Pancreas (tissue), 10 donors: ENCODE measurements at regions of chr1 and their contacts with region 1.

Region 1: GRCh38 chr1:175481126-175482066 is 262.0 kb downstream of the TNR start:
- DNase-seq: no peak
- ATAC-seq: peak; percentile 58 to 90 (median 84)
- H3K4me3 ChIP-seq: no peak overlapping the region
- H3K27ac ChIP-seq: no peak overlapping the region
- H3K4me1 ChIP-seq: no peaks in the 10 kb centered on the region
- H3K27me3 ChIP-seq: no peaks in the 10 kb centered on the region
- CTCF ChIP-seq: peak; percentile 24 to 46 (median 44)

Region 2: DNA sequence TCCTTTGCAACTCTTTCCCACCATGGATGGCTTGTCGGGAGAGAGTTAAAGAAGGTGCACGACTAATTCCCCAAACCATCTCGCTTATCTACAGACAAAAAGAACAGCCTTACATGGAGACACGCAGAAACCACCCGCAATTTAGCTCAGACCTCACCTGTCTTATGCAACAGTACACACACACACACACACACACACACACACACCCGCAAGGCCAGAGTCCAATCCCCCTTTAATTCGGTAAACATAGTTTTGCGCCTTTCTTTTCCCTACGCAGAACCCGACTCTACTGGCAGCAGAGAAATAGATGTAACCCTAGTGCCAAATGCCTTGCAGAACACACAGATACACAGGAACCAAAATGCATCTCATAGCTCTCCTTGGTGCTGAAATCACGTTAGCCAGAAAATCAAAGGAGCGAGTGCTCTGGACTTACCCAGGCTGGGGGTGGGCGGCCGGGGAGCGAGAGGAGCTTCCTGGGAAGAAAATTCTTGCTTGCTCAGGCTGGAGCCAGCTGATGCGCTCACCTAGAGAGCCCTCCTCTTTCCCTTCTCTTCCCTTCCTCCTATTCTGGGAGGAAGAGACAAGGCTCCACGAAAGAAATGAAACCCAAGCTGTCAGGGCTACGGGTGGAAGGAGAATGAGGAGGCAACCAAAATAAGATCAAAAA is 261.5 kb after region 1 on chr1:
- intact Hi-C with region 1: loop called in 1 of 3 experiments (anchors 10 kb)
- DNase-seq: peak in 2 of 6 donors; percentile 7 to 20
- ATAC-seq: peak; percentile 81 to 90 (median 86)
- H3K4me3 ChIP-seq: peak overlapping the region in 1 of 4 donors; percentile 17
- H3K27ac ChIP-seq: no peak overlapping the region
- H3K4me1 ChIP-seq: no peaks in the 10 kb centered on the region
- H3K27me3 ChIP-seq: no peaks in the 10 kb centered on the region
- CTCF ChIP-seq: no peak

Region 3: GRCh38 chr1:175824079-175824478 is 342.7 kb after region 1 on chr1:
- intact Hi-C with region 1: loop called in 1 of 3 experiments (anchors 10 kb)
- DNase-seq: peak; percentile 20 to 82 (median 51)
- ATAC-seq: peak in 3 of 4 donors; percentile 55 to 66 (median 59)
- H3K4me3 ChIP-seq: no peak overlapping the region
- H3K27ac ChIP-seq: no peak overlapping the region
- H3K4me1 ChIP-seq: no peaks in the 10 kb centered on the region
- H3K27me3 ChIP-seq: no peaks in the 10 kb centered on the region
- CTCF ChIP-seq: peak in 1 of 4 donors; percentile 23